Activated CD8-positive, alpha-beta memory T cell treated with anti-CD3 and anti-CD28 coated beads, Interleukin-2, amount 10 ng/mL, durations not matched to agents 7 days and 5 days (primary cell): ENCODE measurements at regions of chr15 and their contacts with region 1.

Region 1: DNA sequence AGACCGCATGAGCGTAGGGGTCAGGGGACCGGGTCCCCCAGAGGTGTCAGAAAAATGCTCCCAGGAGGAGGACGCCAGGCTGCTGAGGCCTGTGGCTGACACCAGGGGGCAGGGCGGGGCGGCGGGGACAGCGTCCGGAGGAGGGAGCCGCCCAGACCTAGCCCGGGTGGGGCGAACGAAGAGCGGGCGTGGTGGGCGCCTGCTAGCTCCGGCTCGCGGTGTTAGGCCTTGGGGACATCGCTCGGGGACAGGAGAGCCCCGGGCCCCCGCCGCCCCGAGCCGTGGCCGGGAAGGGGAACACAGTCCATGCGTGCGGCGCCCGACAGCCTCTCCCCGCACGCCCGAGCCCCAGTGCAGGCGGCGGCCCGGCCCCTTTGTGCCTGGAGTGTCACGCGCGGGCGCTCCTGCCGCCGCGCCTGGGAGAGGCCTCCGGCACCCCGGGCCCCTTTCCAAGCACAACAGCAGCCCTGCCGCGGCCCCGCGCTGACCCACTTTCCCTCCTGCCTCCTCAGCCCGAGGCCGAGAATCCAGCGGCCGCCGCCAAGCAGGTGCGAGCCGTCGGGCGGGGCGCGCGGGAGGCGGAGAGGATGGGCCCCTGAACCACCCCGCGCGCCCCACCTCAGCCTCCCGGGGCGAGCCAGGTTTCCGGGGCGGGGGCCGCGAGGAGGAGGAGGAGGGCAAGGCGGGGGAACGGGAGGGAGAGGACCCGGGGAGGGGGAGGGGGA is 111.0 kb upstream of the KLF13 start:
- DNase-seq: peak; percentile 90
- ATAC-seq: peak; percentile 88
- H3K4me3 Mint-ChIP-seq: peak overlapping the region; percentile 69
- H3K27ac Mint-ChIP-seq: peak overlapping the region; percentile 81
- H3K4me1 Mint-ChIP-seq: peaks cover 29% of the 10 kb centered on the region
- H3K27me3 Mint-ChIP-seq: no peaks in the 10 kb centered on the region

Region 2: GRCh38 chr15:31265871-31266711 is 50.4 kb after region 1 on chr15:
- CTCF ChIA-PET with region 1: interaction called, 14 read pairs
- DNase-seq: peak; percentile 89
- ATAC-seq: peak; percentile 75
- H3K4me3 Mint-ChIP-seq: peak overlapping the region; percentile 15
- H3K27ac Mint-ChIP-seq: peak overlapping the region; percentile 94
- H3K4me1 Mint-ChIP-seq: peaks cover 73% of the 10 kb centered on the region
- H3K27me3 Mint-ChIP-seq: no peaks in the 10 kb centered on the region

Region 3: GRCh38 chr15:31326156-31326732 is 110.6 kb after region 1 on chr15:
- CTCF ChIA-PET with region 1: interaction called, 24 read pairs
- DNase-seq: peak; percentile 99
- ATAC-seq: peak; percentile 80
- H3K4me3 Mint-ChIP-seq: peak overlapping the region; percentile 64
- H3K27ac Mint-ChIP-seq: peak overlapping the region; percentile 93
- H3K4me1 Mint-ChIP-seq: peaks cover 40% of the 10 kb centered on the region
- H3K27me3 Mint-ChIP-seq: no peaks in the 10 kb centered on the region

Region 4: GRCh38 chr15:31483053-31483985 is 267.7 kb after region 1 on chr15:
- CTCF ChIA-PET with region 1: interaction called, 29 read pairs
- DNase-seq: peak; percentile 79
- ATAC-seq: peak; percentile 72
- H3K4me3 Mint-ChIP-seq: peak overlapping the region; percentile 89
- H3K27ac Mint-ChIP-seq: peak overlapping the region; percentile 96
- H3K4me1 Mint-ChIP-seq: peaks cover 71% of the 10 kb centered on the region
- H3K27me3 Mint-ChIP-seq: no peaks in the 10 kb centered on the region